Left cardiac atrium (tissue), 4 donors: ENCODE measurements at regions of chr15 and their contacts with region 1.

Region 1: DNA sequence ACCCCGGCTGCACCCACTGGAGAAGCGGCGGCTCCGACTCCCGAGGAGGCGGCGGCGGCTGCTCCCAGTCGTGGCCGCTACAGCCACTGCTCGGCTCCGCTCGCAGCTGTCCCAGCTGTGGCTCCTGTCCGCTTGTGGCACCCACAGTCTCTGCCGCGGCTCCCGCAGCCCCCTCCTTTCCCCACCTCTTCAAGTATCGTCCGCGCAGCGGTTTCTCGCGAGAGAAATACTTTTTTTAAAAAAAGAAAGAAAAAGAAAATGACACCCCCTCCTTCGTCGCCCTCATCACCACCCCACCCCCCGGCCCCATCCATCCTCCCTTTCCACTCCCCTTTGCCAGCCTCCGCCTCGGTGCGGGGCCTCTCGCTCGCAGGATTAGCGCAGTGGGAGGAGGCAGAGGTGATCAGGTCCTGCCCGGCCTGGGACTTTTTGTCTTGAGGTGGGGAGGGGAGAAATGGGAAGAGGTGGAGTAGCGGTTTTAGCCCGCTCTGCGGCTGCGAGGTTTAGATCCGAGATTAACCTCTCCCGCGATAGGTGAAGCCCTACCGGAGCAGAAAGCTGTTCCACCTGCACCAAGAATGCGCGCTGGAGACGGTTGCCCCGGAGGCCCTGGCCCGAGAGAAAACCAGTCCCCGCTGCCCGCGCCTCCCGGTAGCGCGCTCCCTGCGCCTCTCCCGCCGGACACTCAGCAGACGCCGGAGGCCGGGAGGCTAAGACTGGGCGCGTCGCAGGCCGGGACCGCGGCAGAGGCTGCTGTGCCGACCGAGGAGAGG is at the start of gene FBN1:
- DNase-seq: peak; percentile 81
- ATAC-seq: peak; percentile 83 to 87
- total RNA-seq, gene FBN1: 105 to 110 TPM

Region 2: GRCh38 chr15:48358229-48358641 is 287.5 kb before region 1 on chr15:
- intact Hi-C with region 1: loop called (anchors 5 to 10 kb)
- DNase-seq: no peak
- ATAC-seq: peak; percentile 48 to 58

Region 3: GRCh38 chr15:48794697-48795134 is 149.0 kb after region 1 on chr15:
- intact Hi-C with region 1: loop called in 1 of 2 experiments (anchors 10 kb)
- DNase-seq: no peak
- ATAC-seq: peak; percentile 38 to 52

Region 4: GRCh38 chr15:48800811-48801455 is 155.2 kb after region 1 on chr15:
- intact Hi-C with region 1: loop called (anchors 10 kb)
- DNase-seq: no peak
- ATAC-seq: peak; percentile 47 to 50